Colonic mucosa (tissue), 4 donors: ENCODE measurements at regions of chr9 and their contacts with region 1.

Region 1: GRCh38 chr9:83355024-83355444 is 183.2 kb downstream of the FRMD3 start:
- DNase-seq: no peak
- H3K4me3 ChIP-seq: no peak overlapping the region
- H3K27ac ChIP-seq: no peak overlapping the region
- H3K4me1 ChIP-seq: no peaks in the 10 kb centered on the region
- H3K27me3 ChIP-seq: no peaks in the 10 kb centered on the region
- CTCF ChIP-seq: no peak

Region 2: GRCh38 chr9:81848472-81848871 is 1506.6 kb before region 1 on chr9:
- intact Hi-C with region 1: no loop called
- DNase-seq: no peak
- H3K4me3 ChIP-seq: no peak overlapping the region
- H3K27ac ChIP-seq: no peak overlapping the region
- H3K4me1 ChIP-seq: no peaks in the 10 kb centered on the region
- H3K27me3 ChIP-seq: no peaks in the 10 kb centered on the region
- CTCF ChIP-seq: peak; percentile 32

Region 3: DNA sequence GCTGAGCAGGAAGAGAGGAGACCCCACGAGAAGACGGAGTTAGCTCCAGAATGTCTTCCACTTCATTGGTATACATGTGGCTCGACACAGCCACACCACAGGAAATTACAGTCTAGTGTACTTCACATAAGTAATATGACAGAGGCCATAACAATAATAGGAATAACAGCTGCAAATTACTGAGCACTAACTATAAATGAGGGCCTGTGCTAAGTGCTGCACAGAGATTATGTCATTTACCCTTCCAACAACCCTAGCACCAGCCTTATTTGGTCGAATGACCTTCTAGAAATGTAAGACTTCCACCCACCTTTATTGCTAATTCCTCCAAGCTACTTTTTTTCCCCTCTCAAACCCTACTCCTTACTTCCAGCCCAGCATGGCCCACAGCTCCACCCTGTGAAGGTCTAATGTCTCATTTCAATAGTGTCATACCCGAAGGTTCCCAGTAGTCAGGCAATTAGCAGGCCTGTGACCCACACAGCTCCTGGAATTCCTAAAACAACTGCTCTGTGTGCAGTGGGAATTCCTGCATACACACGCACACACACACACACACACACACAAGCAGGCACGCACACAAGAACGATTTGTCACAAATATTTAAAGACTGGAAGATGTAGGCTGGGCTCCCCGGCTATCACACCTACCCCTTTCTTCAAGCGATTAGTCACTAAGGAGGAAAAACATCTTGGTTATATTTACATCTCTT is 48.6 kb after region 1 on chr9:
- intact Hi-C with region 1: no loop called
- DNase-seq: no peak
- H3K4me3 ChIP-seq: no peak overlapping the region
- H3K27ac ChIP-seq: no peak overlapping the region
- H3K4me1 ChIP-seq: no peaks in the 10 kb centered on the region
- H3K27me3 ChIP-seq: no peaks in the 10 kb centered on the region
- CTCF ChIP-seq: no peak

Region 4: GRCh38 chr9:83419961-83420360 is 64.9 kb after region 1 on chr9:
- intact Hi-C with region 1: loop called (anchors 10 kb)
- DNase-seq: no peak
- H3K4me3 ChIP-seq: no peak overlapping the region
- H3K27ac ChIP-seq: no peak overlapping the region
- H3K4me1 ChIP-seq: no peaks in the 10 kb centered on the region
- H3K27me3 ChIP-seq: no peaks in the 10 kb centered on the region
- CTCF ChIP-seq: no peak